Naive thymus-derived CD8-positive, alpha-beta T cell (primary cell): ENCODE measurements at regions of chr21 and their contacts with region 1.

Region 1: GRCh38 chr21:41500931-41501381 is 7.0 kb downstream of the TMPRSS2 start:
- DNase-seq: no peak
- ATAC-seq: no peak
- H3K4me3 Mint-ChIP-seq: no peak overlapping the region
- H3K27ac Mint-ChIP-seq: no peak overlapping the region
- H3K4me1 Mint-ChIP-seq: peaks cover 0 to 2% (median 0%) of the 10 kb centered on the region in 4 donors
- H3K27me3 Mint-ChIP-seq: peaks cover 8 to 45% (median 18%) of the 10 kb centered on the region in 5 donors

Region 2: DNA sequence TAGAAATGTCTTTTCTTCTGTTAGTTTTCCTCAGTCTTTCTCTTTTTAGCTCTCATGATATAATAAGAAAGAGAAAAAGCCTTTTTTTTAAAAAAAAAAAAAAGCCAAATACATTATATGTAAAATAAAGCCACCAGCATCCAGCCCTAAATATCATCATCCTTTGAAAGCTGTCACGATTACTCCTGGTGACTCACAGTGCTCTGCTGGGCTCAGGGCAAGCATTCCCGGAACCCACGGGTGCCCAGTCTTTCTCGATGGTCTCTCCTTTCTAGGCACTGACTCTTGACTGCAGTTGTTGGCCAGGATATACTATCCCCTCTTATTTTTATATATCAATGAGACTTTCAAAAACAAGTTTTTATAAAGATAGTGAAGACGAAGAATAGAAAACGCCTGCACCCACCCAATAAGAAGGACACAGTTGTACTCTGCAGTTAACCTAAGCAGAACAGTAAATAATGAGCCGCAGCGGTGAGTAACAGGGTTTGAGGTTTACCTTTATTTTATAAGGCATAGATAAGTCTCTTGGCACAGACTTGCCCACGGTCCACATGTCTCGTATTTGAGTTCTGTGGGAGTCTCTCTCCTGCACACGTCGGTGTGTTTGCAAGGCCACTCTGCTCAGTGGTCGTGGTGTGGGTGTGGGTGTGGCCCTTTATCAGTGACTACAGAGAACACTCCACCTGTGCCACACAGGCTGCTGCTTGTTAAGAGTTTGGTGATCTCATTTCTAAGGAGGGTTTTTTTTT is 154.8 kb before region 1 on chr21:
- POLR2A ChIA-PET with region 1: no interaction called
- DNase-seq: no peak
- ATAC-seq: no peak
- H3K4me3 Mint-ChIP-seq: no peak overlapping the region
- H3K27ac Mint-ChIP-seq: peak overlapping the region in 1 of 10 donors; percentile 27
- H3K4me1 Mint-ChIP-seq: peaks cover 0 to 2% (median 0%) of the 10 kb centered on the region in 4 donors
- H3K27me3 Mint-ChIP-seq: peaks cover 0 to 12% (median 7%) of the 10 kb centered on the region in 5 donors

Region 3: DNA sequence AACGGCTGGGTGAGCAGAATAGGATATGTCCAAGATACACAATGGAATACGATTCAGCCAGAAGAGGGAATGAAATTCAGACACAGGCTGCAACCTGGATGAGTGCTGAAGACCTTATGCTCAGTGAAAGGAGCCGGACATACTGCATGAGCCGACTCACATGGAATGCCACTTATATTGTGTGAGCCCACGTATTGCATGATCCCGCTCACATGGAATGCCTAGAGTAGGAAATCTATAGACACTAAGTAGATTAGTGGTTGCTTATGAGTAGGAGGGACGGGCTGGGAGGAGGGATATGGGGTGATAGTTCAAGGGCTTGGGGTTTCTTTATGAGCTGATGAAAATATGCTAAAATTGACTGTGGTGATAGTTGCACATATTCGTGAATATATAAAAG is 19.8 kb before region 1 on chr21:
- POLR2A ChIA-PET with region 1: interaction called, 12 read pairs
- DNase-seq: no peak
- ATAC-seq: no peak
- H3K4me3 Mint-ChIP-seq: no peak overlapping the region
- H3K27ac Mint-ChIP-seq: peak overlapping the region in 1 of 10 donors; percentile 6
- H3K4me1 Mint-ChIP-seq: peaks cover 4 to 7% (median 6%) of the 10 kb centered on the region in 4 donors
- H3K27me3 Mint-ChIP-seq: peaks cover 0 to 16% (median 5%) of the 10 kb centered on the region in 5 donors

Region 4: GRCh38 chr21:41548781-41549180 is 47.8 kb after region 1 on chr21:
- POLR2A ChIA-PET with region 1: no interaction called
- DNase-seq: no peak
- ATAC-seq: no peak
- H3K4me3 Mint-ChIP-seq: no peak overlapping the region
- H3K27ac Mint-ChIP-seq: peak overlapping the region in 1 of 10 donors; percentile 20
- H3K4me1 Mint-ChIP-seq: peaks cover 0 to 7% (median 2%) of the 10 kb centered on the region in 4 donors
- H3K27me3 Mint-ChIP-seq: peaks cover 4 to 16% (median 9%) of the 10 kb centered on the region in 5 donors

Region 5: GRCh38 chr21:42209819-42210479 is 709.0 kb after region 1 on chr21:
- POLR2A ChIA-PET with region 1: no interaction called
- DNase-seq: no peak
- ATAC-seq: no peak
- H3K4me3 Mint-ChIP-seq: no peak overlapping the region
- H3K27ac Mint-ChIP-seq: no peak overlapping the region
- H3K4me1 Mint-ChIP-seq: peaks cover 0 to 2% (median under 1%) of the 10 kb centered on the region in 4 donors
- H3K27me3 Mint-ChIP-seq: no peaks in the 10 kb centered on the region